GM10248 (cell line): ENCODE measurements at regions of chr6 and their contacts with region 1.

Region 1: DNA sequence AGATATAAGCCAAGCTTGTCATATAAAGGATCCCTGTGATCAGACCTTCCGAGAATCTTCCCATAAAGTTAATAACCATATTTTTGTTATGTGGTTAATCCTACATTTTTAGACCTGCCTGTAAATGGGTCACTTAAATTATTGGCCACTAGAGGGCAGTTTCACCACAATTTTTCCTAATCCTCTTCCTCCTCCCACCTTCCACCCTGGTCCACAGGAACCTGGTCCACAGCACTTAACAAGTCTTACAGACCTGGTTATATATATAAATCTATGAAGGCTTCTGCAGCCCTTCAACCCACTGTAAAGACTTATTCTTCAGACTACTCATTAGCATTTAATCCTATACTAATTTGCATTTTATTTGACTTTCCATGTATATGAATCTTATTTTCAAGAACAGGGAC is 28.3 kb downstream of the MRS2 start:
- DNase-seq: peak; percentile 39
- CTCF ChIP-seq: peak; percentile 43

Region 2: GRCh38 chr6:24419526-24419925 is 11.5 kb before region 1 on chr6:
- CTCF ChIA-PET with region 1: interaction called, 23 read pairs
- POLR2A ChIA-PET with region 1: no interaction called
- DNase-seq: no peak
- CTCF ChIP-seq: no peak

Region 3: DNA sequence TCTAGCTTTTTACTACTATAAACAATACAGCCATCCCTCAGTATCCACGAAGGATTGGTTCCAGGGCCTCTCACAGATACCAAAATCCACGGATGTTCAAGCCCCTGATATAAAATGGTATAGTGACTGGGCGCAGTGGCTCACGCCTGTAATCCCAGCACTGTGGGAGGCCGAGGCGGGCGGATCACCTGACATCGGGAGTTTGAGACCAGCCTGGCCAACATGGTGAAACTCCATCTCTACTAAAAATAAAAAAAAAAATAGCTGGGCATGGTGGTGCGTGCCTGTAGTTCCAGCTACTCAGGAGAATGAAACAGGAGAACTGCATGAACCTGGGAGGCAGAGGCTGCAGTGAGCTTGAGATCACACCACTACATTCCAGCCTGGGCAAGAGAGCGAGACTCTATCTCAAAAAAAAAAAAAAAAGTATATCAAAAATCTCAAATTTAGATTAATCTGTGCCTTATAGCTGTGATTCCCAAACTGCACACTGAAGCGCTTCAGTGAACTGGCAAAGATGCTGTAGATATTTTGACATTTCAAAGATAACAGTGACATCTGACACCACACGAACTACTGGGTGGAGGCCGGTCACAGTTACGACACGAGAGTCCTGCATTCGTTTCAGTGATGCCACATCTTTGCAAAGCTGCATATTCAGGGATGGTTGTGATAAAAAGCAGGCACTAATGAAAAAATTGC is 10.0 kb after region 1 on chr6:
- CTCF ChIA-PET with region 1: interaction called, 55 read pairs
- POLR2A ChIA-PET with region 1: no interaction called
- DNase-seq: no peak
- CTCF ChIP-seq: no peak

Region 4: DNA sequence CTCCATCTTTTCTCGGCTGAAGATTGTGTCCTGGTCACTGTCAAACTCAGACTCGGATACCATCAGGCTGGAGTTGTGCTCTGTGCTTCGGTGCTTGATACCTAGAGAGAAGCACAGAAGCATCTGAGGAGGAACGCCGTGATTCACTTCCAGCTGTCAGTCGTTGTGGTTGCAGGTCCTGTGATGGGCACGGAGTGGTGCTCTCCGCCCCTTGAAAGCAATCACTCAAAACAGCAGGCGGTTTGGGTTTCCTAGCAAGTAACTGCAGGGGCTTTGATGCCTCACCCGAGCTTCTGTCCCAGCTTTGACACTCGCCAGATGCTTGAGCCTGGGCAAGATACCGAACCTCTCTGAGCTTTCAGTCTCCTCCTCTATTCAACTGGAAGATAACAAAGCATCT is 116.2 kb after region 1 on chr6:
- CTCF ChIA-PET with region 1: no interaction called
- POLR2A ChIA-PET with region 1: no interaction called
- DNase-seq: peak; percentile 42
- CTCF ChIP-seq: peak; percentile 25

Region 5: DNA sequence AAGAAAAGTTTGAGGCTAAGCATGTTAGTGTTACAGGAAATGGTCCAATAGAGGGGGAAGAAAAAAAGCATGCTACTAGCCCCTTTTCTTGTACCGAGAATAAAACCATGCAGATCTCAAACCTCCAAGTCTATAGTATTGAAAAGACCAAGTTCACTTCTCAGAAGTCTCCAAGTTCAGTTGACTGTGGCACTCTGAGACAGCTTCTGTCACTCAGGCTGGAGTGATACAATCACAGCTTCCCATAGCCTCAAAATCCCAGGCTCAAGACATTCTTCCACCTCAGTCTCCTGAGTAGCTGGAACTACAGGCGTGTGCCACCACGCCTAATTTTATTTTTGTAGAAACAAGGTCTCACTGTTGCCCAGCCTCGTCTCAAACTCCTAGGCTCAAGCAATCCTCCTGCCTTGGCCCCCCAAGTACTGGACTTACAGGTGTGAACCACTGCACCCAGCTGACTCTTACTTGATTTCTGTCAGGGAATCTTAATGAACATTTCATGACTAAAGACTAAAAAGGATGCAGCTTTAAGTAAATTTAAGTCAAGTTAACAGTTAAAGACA is 271.8 kb after region 1 on chr6:
- CTCF ChIA-PET with region 1: no interaction called
- POLR2A ChIA-PET with region 1: no interaction called
- DNase-seq: no peak
- CTCF ChIP-seq: no peak

Region 6: DNA sequence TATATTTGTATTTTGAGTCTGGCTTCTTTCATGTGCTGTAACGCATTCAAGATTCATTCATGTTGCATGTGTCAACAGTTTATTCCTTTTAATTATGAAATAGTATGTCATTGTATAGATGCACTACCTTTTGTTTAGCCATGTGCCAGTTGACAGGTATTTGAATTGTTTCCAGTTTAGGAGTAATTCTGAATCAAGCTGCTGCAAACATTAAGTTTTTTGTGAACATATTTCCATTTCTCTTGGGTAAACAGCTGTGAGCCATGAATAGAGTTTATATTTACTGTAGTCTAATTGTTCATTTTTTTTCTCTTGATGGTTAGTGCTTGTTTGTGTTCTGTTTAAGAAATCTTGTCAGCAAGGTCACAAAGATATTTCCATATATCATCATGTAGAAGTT is 647.1 kb after region 1 on chr6:
- CTCF ChIA-PET with region 1: no interaction called
- POLR2A ChIA-PET with region 1: no interaction called
- DNase-seq: no peak
- CTCF ChIP-seq: no peak